Activated CD8-positive, alpha-beta T cell treated with anti-CD3 and anti-CD28 coated beads for 36 hours (primary cell): ENCODE measurements at regions of chr10 and their contacts with region 1.

Region 1: GRCh38 chr10:111756217-111757061 is 427.1 kb downstream of the GPAM start:
- DNase-seq: peak; percentile 34
- ATAC-seq: no peak
- H3K4me3 Mint-ChIP-seq: no peak overlapping the region
- H3K27ac Mint-ChIP-seq: no peak overlapping the region
- H3K4me1 Mint-ChIP-seq: no peaks in the 10 kb centered on the region
- H3K27me3 Mint-ChIP-seq: peaks cover 9% of the 10 kb centered on the region
- CTCF ChIP-seq: peak; percentile 23

Region 2: GRCh38 chr10:111766464-111766863 is 10.0 kb after region 1 on chr10:
- CTCF ChIA-PET with region 1: interaction called, 13 read pairs
- POLR2A ChIA-PET with region 1: no interaction called
- intact Hi-C with region 1: no loop called
- DNase-seq: no peak
- ATAC-seq: no peak
- H3K4me3 Mint-ChIP-seq: no peak overlapping the region
- H3K27ac Mint-ChIP-seq: no peak overlapping the region
- H3K4me1 Mint-ChIP-seq: no peaks in the 10 kb centered on the region
- H3K27me3 Mint-ChIP-seq: no peaks in the 10 kb centered on the region
- CTCF ChIP-seq: no peak

Region 3: DNA sequence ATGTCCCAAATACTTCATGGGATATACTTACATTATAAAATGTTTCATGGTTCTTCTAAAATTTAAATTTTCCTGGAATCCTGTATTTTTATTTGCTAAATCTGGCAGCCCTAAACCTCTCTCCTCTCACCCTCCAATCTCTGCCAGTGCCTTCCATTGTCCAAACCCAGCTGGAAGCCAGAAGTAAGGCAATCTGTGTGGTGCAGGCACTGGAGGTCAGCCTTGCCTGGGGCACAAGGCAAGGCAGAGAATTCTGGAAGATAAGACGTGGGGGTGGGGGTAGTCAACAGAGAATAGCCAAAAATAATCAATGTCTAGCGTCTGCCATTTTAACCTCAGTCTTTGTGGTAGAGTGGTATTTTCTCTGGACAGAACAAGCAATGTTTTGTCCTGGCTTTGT is 45.4 kb after region 1 on chr10:
- CTCF ChIA-PET with region 1: no interaction called
- POLR2A ChIA-PET with region 1: no interaction called
- intact Hi-C with region 1: no loop called
- DNase-seq: no peak
- ATAC-seq: no peak
- H3K4me3 Mint-ChIP-seq: no peak overlapping the region
- H3K27ac Mint-ChIP-seq: no peak overlapping the region
- H3K4me1 Mint-ChIP-seq: no peaks in the 10 kb centered on the region
- H3K27me3 Mint-ChIP-seq: no peaks in the 10 kb centered on the region
- CTCF ChIP-seq: no peak